ENCODE measurements at regions of chr3 and their contacts with region 1.

Region 1: DNA sequence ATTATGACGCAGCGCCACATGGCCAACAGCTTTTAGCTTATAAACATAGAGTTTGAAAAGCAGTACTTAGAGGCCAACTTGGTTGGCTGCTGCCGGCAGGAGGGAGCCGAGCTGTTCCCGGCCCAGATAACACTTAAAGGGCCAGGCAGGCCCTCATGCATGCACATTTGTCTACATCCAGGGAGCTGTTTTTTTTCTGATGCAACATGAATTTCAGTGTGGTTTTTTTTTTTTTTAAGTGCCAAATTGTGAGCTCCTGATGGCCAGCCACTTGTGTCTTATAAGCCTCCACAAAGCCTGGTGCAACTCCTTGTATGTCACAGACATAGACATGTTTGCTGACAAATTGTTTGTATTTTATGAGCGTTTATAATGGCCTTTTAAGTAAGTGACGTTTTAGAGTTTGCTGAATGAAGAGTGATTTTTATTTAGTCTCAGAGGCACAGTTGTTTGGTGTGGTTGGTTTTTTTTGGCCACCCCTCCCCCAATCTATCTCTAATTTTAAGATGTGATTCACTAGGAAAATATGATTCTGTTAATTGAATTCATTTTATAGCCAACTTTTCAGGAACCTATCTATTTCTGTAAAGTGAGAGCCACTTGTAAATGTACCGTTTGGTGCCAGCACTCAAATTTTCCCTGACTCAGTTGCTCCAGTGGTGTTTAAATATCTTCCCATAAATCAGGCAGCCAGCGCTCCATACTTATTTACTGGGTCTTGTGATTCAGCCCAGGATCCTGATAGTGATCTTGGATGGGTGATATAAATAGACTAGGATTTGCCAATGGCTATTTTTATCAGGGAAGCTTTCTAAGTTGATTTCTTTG is 134.3 kb downstream of the VGLL4 start:
- DNase-seq: peak; percentile 83
- ATAC-seq: peak; percentile 89 to 94

Region 2: DNA sequence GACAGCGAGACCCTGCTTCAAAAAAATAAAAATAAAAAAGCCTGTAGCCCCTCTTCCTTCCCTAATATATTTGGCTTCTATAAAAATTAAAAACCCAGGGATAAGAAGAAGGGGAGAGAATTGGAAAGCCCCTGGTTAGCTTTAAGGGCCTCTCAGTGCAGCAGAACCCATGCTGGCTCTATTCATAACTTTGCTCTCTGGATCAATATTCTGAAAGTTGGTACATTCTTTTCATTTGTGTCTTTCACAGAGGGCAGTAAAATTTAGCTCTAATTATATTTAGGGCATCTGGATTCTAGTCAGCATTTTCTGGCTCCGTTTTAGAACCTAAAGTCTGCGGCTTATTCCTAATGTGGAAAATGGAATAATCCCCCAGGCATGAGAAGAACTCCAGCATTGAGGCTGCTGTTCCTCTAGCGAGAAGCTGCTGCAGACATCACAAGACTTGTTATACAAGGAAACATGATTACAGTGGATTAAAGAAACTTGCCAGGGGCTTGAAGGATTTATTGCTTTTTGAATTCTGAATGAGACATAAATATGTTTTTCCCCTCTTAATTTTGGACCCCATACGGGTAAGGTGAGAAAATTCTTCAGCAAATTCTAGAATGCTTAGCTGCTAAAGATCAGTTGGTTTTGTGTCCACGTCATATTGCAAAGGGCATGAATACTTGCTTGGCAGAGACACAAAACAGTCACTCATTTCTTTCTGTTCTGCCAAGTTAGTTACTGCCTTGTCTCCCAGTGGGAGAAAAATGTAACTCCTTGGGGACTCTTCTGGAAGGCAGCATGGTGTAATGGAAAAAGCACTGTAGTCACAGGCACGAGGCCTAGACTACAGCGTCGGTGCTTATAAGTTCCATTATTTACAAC is 43.4 kb before region 1 on chr3:
- intact Hi-C with region 1: loop called in 1 of 2 experiments (anchors 5 kb)
- DNase-seq: no peak
- ATAC-seq: peak; percentile 84 to 91

Region 3: GRCh38 chr3:11561341-11561943 is 52.1 kb after region 1 on chr3:
- intact Hi-C with region 1: loop called in 1 of 2 experiments (anchors 5 kb)
- DNase-seq: no peak
- ATAC-seq: no peak

Measured in left cardiac atrium (tissue), 4 donors.